ENCODE measurements at regions of chr16 and their contacts with region 1.

Region 1: DNA sequence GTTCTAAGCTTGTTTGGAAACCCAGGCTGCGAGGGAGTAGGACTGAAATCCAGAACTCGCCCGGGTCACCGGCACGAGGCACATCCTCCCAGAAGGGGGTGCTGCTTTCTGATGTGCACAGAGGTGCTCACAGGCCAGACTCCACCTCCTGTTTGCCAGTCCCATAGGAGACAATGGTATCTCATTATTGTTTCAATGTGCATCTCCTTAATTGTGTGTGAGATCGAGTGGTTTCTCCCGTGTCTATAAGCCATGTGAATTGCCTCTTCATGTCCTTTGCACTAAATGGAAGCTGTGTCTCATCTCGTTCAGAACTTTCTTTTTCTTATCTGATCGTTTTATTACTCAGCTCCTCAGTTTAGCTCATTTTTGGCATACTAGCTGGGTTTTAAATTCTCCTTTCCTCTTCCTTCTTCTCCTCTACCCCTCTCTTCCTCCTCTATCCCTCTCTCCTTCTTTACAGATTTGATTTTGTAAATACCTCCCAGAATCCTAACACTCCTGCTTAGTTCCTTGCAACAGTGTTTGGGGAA is 32.1 kb upstream of the PRKCB start:
- DNase-seq: peak; percentile 43
- ATAC-seq: peak; percentile 96
- H3K4me3 ChIP-seq: no peak overlapping the region
- H3K27ac ChIP-seq: no peak overlapping the region
- H3K4me1 ChIP-seq: no peaks in the 10 kb centered on the region
- H3K27me3 ChIP-seq: 0 out of 5 replicates have a peak, but pooled peaks cover 0 to 4% of the 10 kb centered on the region in 2 experiments
- CTCF ChIP-seq: peak; percentile 76
- EP300 ChIP-seq: no peak
- POLR2A ChIP-seq: no peak
- RAD21 ChIP-seq: peak; percentile 47

Region 2: GRCh38 chr16:23739516-23739915 is 64.1 kb before region 1 on chr16:
- CTCF ChIA-PET with region 1: interaction called, 4 read pairs
- POLR2A ChIA-PET with region 1: no interaction called
- in situ Hi-C with region 1: no loop called
- intact Hi-C with region 1: loop called (anchors 5 kb)
- DNase-seq: peak; percentile 58
- ATAC-seq: peak; percentile 74
- H3K4me3 ChIP-seq: no peak overlapping the region
- H3K27ac ChIP-seq: no peak overlapping the region
- H3K4me1 ChIP-seq: peaks cover 17% of the 10 kb centered on the region
- H3K27me3 ChIP-seq: peaks cover 0 to 3% of the 10 kb centered on the region in 2 experiments; a peak in 2 of 5 replicates
- CTCF ChIP-seq: no peak
- EP300 ChIP-seq: no peak
- POLR2A ChIP-seq: no peak
- RAD21 ChIP-seq: no peak

Region 3: GRCh38 chr16:23823475-23824384 is 20.1 kb after region 1 on chr16:
- CTCF ChIA-PET with region 1: no interaction called
- POLR2A ChIA-PET with region 1: no interaction called
- in situ Hi-C with region 1: no loop called
- intact Hi-C with region 1: no loop called
- DNase-seq: no peak
- ATAC-seq: no peak
- H3K4me3 ChIP-seq: no peak overlapping the region
- H3K27ac ChIP-seq: no peak overlapping the region
- H3K4me1 ChIP-seq: no peaks in the 10 kb centered on the region
- H3K27me3 ChIP-seq: no peaks in the 10 kb centered on the region; a peak in 1 of 5 replicates
- CTCF ChIP-seq: no peak
- EP300 ChIP-seq: no peak
- POLR2A ChIP-seq: no peak
- RAD21 ChIP-seq: no peak

Region 4: DNA sequence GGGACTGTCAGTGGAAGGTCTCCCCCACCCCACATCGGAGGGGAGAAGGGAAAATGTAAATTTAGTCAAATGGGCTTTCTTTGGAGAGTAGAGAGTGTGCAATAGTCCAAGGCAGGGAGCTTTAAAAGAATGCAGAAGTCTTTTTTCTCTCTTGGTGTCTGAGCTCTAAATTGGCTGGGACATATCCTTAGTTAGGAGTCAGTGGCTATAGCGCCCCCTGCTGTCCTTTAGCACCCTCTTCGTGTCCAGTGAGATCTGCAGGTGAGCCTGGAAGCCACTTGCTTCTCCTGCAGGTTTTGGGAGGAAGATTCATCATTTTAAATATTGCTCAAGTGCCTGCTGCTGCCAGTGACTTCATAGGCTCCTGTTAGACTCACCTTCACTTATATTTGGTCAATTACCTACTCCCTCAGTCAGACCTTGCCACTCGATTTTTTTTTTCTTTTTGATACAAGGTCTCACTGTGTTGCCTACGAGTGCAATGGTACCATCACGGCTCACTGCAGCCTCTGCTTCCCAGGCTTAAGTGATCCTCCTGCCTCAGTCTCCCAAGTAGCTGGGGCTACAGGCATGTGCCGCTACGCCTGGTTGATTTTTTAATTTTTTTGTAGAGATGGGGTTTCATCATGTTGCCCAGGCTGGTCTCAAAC is 206.9 kb after region 1 on chr16:
- CTCF ChIA-PET with region 1: interaction called, 20 read pairs
- POLR2A ChIA-PET with region 1: no interaction called
- in situ Hi-C with region 1: loop called (anchors 5 kb)
- intact Hi-C with region 1: loop called (anchors 1 kb)
- DNase-seq: peak; percentile 79
- ATAC-seq: peak; percentile 94
- H3K4me3 ChIP-seq: no peak overlapping the region
- H3K27ac ChIP-seq: no peak overlapping the region
- H3K4me1 ChIP-seq: peaks cover 5% of the 10 kb centered on the region; the same call in 1 of the 2 replicates
- H3K27me3 ChIP-seq: no peaks in the 10 kb centered on the region; a peak in 2 of 5 replicates
- CTCF ChIP-seq: peak; percentile 81
- EP300 ChIP-seq: no peak
- POLR2A ChIP-seq: no peak
- RAD21 ChIP-seq: peak; percentile 47; the same call in 1 of the 2 replicates

Region 5: DNA sequence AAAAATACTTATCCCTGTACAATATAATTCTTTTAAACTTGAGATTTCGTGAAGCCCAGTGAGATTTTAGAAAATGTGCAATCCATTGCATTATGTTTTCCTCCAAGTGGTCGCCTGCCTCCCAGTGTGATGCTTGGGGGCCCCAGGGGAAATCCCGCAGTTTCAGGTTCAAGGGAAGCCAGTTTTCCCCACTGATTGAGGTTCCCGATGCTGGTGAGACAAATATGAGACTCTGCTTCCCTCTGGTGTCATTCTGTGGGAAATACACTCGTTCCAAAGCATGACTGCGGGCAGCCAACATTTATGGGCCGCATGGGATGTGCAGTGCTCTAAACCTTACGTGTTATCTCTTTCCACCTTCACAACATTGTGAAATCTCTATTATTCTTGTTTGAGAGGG is 233.0 kb after region 1 on chr16:
- CTCF ChIA-PET with region 1: interaction called, 54 read pairs
- POLR2A ChIA-PET with region 1: no interaction called
- in situ Hi-C with region 1: loop called (anchors 5 kb)
- intact Hi-C with region 1: loop called (anchors 1 kb)
- DNase-seq: peak; percentile 46
- ATAC-seq: peak; percentile 81
- H3K4me3 ChIP-seq: no peak overlapping the region
- H3K27ac ChIP-seq: no peak overlapping the region
- H3K4me1 ChIP-seq: no peaks in the 10 kb centered on the region
- H3K27me3 ChIP-seq: no peaks in the 10 kb centered on the region; a peak in 1 of 5 replicates
- CTCF ChIP-seq: peak; percentile 92
- EP300 ChIP-seq: no peak
- POLR2A ChIP-seq: no peak
- RAD21 ChIP-seq: peak; percentile 88

Measured in HepG2 (cell line).